ENCODE measurements at regions of chr1 and their contacts with region 1.

Region 1: GRCh38 chr1:46667782-46668760 is at the start of gene ATPAF1:
- DNase-seq: peak; percentile 79 to 90
- ATAC-seq: peak; percentile 91 to 94 (median 93)
- H3K4me3 ChIP-seq: peak within 1 kb of the TSS; percentile 96
- H3K27ac ChIP-seq: peak within 1 kb of the TSS; percentile 79
- H3K4me1 ChIP-seq: peaks cover 17% of the 10 kb centered on the region
- H3K27me3 ChIP-seq: no peaks in the 10 kb centered on the region
- CTCF ChIP-seq: no peak
- total RNA-seq, gene ATPAF1: 98.3 to 114 (median 107) TPM

Region 2: DNA sequence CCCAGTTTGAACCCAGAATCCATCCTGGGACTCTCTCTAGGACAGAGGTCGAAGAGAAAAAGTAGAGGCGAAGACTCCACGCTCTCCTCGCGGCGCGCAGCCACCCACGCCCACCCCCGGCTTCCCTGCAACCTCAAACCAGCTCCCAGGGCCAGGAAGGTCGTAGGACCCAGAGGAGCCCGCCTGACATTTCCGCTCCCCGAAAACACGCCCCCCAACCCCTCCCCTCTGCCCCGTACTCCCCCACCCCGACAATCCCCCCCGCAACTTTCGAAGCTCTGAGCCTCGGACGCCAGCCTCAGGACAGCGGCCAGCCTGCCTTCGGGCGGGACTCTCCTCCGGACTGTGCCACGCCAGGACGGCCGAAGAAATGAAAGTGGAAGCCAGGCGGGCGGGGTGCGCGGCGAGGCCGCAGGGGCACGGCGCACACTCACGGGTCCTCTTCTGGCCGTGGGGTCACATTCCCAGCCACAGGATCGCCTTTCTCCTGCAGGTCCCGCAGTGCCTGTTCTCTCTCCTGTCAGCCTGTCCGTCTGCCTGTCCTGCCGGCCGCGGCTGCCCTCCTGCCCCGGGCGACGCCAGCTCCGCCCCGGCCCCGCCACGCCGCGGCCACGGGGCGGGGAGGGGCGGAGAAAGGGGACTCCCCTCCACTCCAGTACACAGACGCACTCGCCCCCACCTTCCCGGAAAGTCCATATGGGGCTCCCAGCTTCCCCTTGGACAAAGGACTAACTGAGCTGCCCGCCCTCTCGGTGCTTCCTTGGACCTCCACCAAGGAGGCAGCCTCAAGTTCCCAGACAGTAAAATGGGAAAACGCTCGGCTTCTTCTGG is 51.6 kb before region 1 on chr1 and contains the start of gene MOB3C:
- intact Hi-C with region 1: loop called (anchors 5 kb)
- DNase-seq: peak; percentile 89 to 93
- ATAC-seq: peak; percentile 78 to 80 (median 78)
- H3K4me3 ChIP-seq: peak within 1 kb of the TSS; percentile 87
- H3K27ac ChIP-seq: peak within 1 kb of the TSS; percentile 94
- H3K4me1 ChIP-seq: peaks cover 50% of the 10 kb centered on the region
- H3K27me3 ChIP-seq: no peaks in the 10 kb centered on the region
- CTCF ChIP-seq: no peak
- total RNA-seq, gene MOB3C: 12.1 to 36.3 (median 28.5) TPM

Region 3: DNA sequence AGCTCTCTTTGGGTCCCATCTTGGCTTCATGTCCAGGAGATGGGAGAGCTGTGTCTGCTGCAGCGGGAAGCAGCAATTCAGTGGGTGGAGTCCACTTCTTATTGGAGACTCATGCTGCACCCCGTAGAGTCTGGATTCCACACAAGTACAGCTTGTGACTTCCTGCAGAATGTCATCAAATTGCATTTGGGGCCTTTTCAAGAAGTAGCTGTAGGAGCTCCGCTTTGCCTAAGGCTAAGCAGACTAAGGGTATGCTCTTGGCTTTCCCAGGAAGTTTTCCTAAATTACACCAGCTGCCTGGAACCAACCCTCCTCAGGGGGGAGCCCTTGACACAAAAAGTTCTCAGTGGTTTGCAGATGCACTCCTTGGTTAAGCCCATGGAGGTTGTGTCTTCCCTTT is 45.7 kb before region 1 on chr1:
- intact Hi-C with region 1: loop called (anchors 5 kb)
- DNase-seq: no peak
- ATAC-seq: peak; percentile 59 to 82 (median 68)
- H3K4me3 ChIP-seq: no peak overlapping the region
- H3K27ac ChIP-seq: no peak overlapping the region
- H3K4me1 ChIP-seq: peaks cover under 1% of the 10 kb centered on the region
- H3K27me3 ChIP-seq: no peaks in the 10 kb centered on the region
- CTCF ChIP-seq: peak; percentile 51

Region 4: GRCh38 chr1:46718727-46719622 is 50.9 kb after region 1 on chr1 and contains the start of gene EFCAB14:
- intact Hi-C with region 1: loop called (anchors 5 kb)
- DNase-seq: peak; percentile 96 to 98
- ATAC-seq: peak; percentile 99 to 100 (median 100)
- H3K4me3 ChIP-seq: peak within 1 kb of the TSS; percentile 100
- H3K27ac ChIP-seq: peak within 1 kb of the TSS; percentile 83
- H3K4me1 ChIP-seq: peaks cover 26% of the 10 kb centered on the region
- H3K27me3 ChIP-seq: no peaks in the 10 kb centered on the region
- CTCF ChIP-seq: no peak
- total RNA-seq, gene EFCAB14: 48.4 to 63.3 (median 52.9) TPM

Region 5: DNA sequence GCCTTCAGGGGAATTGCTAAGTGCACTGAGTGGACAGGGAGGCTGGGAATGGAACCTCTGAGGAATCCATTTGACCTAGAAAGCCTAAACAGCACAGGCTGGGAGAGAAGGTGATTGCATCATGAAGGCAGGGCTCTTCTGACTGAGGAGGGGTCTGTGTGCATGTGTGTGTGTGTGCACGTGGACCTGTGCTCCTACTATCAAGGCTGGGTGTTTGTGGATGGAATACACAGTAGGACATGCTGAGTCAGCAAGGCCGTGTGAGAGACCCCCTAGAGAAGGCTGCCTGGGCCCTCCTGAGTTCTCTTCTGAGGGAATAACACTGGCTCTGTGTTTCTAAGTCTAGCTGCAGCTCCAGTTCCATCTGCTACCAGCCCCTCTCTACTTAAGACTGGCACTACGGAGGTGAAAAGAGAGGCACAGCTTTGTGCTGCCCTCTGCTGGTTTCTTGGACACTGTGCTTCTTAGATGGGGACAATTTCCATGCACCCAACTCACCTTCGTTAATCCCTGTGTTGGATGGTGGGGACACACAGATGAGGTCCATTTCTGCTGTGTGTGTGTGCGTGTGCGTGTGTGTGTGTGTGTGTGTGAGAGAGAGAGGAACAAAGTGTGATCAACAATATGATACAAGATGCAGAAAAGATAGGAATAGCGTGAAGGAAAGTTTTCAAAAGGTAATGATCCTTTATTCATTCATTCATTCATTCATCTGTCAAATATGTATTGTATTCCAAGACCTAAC is 57.1 kb after region 1 on chr1:
- intact Hi-C with region 1: loop called in 1 of 2 experiments (anchors 5 kb)
- DNase-seq: peak; percentile 38 to 70
- ATAC-seq: peak; percentile 89 to 99 (median 94)
- H3K4me3 ChIP-seq: no peak overlapping the region
- H3K27ac ChIP-seq: no peak overlapping the region
- H3K4me1 ChIP-seq: peaks cover 4% of the 10 kb centered on the region
- H3K27me3 ChIP-seq: peaks cover 0 to 6% (median 0%) of the 10 kb centered on the region in 3 donors
- CTCF ChIP-seq: peak; percentile 80